Activated naive CD4-positive, alpha-beta T cell treated with anti-CD3 and anti-CD28 coated beads for 36 hours (primary cell): ENCODE measurements at regions of chr22 and their contacts with region 1.

Region 1: DNA sequence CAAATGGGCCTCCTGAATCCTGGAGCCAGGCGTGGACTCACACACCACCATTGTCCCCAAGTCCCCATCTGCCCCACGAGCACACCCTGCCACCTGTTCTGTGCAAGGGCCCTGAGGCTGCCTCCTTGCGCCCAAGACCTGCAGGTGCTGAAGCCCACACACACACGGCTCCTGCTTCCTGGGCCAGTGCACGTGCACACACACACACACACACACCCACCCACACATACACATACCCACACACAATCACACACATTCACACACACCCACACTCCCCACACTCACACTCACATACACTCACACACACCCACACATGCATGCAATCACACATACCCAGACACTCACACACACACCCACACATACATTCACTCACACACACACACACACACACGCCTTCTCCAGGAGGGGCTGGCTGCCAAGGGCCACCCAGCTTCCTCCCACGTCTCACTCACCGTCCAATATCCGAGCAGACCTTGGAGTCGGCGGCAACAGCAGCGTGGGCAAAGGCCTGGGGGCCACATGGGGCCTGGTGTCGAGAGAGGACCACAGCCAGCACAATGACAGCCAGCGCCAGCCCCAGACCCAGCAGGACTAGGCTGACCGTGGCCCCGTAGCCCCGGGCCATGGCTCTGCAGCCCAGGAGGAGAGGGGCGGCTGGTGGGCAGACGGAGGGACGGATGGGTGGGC is 638 bp downstream of the GGT5 start:
- DNase-seq: no peak
- H3K4me3 Mint-ChIP-seq: no peak overlapping the region
- H3K27ac Mint-ChIP-seq: no peak overlapping the region
- H3K4me1 Mint-ChIP-seq: peaks cover 36% of the 10 kb centered on the region
- H3K27me3 Mint-ChIP-seq: no peaks in the 10 kb centered on the region

Region 2: GRCh38 chr22:24117942-24118341 is 126.3 kb before region 1 on chr22:
- CTCF ChIA-PET with region 1: no interaction called
- intact Hi-C with region 1: no loop called
- DNase-seq: no peak
- H3K4me3 Mint-ChIP-seq: no peak overlapping the region
- H3K27ac Mint-ChIP-seq: no peak overlapping the region
- H3K4me1 Mint-ChIP-seq: no peaks in the 10 kb centered on the region
- H3K27me3 Mint-ChIP-seq: no peaks in the 10 kb centered on the region

Region 3: GRCh38 chr22:24189249-24190158 is 54.7 kb before region 1 on chr22:
- CTCF ChIA-PET with region 1: interaction called, 5 read pairs
- intact Hi-C with region 1: loop called (anchors 5 kb)
- DNase-seq: peak; percentile 64
- H3K4me3 Mint-ChIP-seq: no peak overlapping the region
- H3K27ac Mint-ChIP-seq: no peak overlapping the region
- H3K4me1 Mint-ChIP-seq: no peaks in the 10 kb centered on the region
- H3K27me3 Mint-ChIP-seq: no peaks in the 10 kb centered on the region

Region 4: DNA sequence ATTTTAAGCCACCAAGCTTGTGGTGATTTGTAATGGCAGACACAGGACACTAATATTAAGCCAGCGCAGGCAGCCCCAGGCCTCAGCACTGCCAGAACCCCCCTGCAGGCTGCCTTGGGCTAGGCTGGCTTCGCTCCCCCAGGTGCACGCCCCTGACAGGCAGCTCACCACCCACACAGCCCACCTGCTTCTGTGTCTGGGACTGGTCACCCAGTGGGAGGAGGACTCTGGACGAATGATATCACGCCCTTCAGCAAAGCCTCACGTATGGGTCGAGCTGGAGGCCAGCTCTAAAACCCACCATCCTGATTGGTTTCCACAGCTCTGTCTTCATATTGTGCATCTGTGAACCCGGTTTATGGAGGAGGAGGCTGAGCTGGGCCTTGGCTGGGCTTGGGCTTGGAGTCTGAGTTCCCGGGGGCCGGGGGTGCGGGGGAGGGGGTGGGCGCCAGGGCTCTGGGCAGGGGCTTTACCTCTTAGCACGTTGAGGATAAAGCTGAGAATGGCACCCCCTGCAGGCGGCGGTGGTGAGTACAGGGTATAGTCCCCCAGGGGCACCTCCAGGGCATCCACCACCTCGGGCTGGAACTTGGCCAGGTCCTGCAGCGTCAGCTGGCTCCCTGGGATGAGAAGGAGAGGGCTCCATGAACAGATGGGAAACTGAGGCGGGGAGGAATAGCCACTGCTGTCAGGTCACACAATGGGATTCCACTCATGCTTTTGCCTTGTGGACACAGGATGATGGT is 13.2 kb before region 1 on chr22:
- CTCF ChIA-PET with region 1: interaction called, 17 read pairs
- intact Hi-C with region 1: no loop called
- DNase-seq: peak; percentile 73
- H3K4me3 Mint-ChIP-seq: no peak overlapping the region
- H3K27ac Mint-ChIP-seq: no peak overlapping the region
- H3K4me1 Mint-ChIP-seq: peaks cover 2% of the 10 kb centered on the region
- H3K27me3 Mint-ChIP-seq: no peaks in the 10 kb centered on the region